A549 (cell line): ENCODE measurements at regions of chr11 and their contacts with region 1.

Region 1: GRCh38 chr11:84384731-84385130 is 1098.6 kb upstream of the CCDC90B start:
- DNase-seq: peak; percentile 4 to 49
- ATAC-seq: peak in 1 of 2 experiments; percentile 51; a peak in 1 of 6 replicates
- H3K4me3 ChIP-seq: no peak overlapping the region
- H3K27ac ChIP-seq: no peak overlapping the region
- H3K4me1 ChIP-seq: no peaks in the 10 kb centered on the region
- CTCF ChIP-seq: peak; percentile 72
- EP300 ChIP-seq: no peak
- POLR2A ChIP-seq: no peak
- RAD21 ChIP-seq: peak; percentile 6 to 47; a peak in 4 of 5 replicates

Region 2: GRCh38 chr11:84396521-84396920 is 11.8 kb after region 1 on chr11:
- CTCF ChIA-PET with region 1: interaction called, 18 read pairs
- POLR2A ChIA-PET with region 1: no interaction called
- DNase-seq: no peak
- ATAC-seq: no peak
- H3K4me3 ChIP-seq: no peak overlapping the region
- H3K27ac ChIP-seq: no peak overlapping the region
- H3K4me1 ChIP-seq: no peaks in the 10 kb centered on the region
- CTCF ChIP-seq: no peak
- EP300 ChIP-seq: no peak
- POLR2A ChIP-seq: no peak
- RAD21 ChIP-seq: no peak

Region 3: DNA sequence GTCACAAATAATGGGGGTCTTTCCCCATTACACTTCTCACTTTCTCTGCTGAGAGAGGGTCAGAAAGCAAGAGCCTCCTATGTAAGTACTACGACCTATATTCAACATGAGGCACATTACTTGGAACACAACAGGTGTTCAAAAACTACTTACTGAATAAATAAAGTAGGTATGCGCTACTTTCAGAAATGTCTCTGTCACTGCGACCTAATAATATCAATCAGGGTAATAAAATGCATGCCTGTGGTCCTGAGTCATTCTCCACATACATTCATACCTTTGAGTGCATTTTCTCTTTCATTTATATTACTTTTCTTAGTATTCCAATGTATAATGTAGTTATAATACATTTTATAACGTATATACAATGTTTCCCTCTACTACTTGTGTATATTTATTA is 403.5 kb after region 1 on chr11:
- CTCF ChIA-PET with region 1: no interaction called
- POLR2A ChIA-PET with region 1: no interaction called
- DNase-seq: no peak
- ATAC-seq: no peak
- H3K4me3 ChIP-seq: no peak overlapping the region
- H3K27ac ChIP-seq: no peak overlapping the region
- H3K4me1 ChIP-seq: no peaks in the 10 kb centered on the region
- CTCF ChIP-seq: no peak
- EP300 ChIP-seq: no peak
- POLR2A ChIP-seq: no peak
- RAD21 ChIP-seq: no peak